GM10248 (cell line): ENCODE measurements at regions of chr1 and their contacts with region 1.

Region 1: DNA sequence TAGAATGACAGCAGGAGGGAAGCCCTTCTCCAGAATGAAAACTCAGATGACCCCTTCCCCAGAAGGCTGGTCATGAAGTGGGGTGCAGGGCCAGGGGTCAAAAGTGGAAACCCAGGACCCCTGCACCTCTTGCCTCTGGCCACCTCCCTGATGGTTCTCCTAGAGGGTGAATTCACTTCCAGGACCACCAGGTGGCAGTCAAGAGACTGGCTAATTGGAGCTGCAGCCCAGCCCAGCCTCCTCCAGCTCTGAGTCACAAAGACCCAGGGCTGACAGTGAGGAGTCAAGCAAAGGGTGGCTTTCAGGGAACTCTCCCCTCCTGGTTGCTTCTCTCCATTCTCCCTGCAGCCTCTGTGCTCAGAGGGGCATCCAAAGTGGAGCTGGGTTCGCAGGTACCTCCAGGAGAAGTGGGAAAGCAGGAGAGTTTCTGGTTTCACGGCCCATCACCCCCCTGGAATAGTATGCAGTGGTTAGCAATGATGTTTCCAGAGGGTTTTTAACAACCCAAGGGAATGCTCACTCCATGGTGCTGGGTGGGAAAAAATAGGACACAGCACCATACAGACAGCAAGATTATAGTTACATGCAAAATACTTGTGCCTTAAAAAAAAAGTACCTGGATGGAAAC is 6.1 kb upstream of the EPHB2 start:
- DNase-seq: peak; percentile 81
- CTCF ChIP-seq: peak; percentile 75

Region 2: DNA sequence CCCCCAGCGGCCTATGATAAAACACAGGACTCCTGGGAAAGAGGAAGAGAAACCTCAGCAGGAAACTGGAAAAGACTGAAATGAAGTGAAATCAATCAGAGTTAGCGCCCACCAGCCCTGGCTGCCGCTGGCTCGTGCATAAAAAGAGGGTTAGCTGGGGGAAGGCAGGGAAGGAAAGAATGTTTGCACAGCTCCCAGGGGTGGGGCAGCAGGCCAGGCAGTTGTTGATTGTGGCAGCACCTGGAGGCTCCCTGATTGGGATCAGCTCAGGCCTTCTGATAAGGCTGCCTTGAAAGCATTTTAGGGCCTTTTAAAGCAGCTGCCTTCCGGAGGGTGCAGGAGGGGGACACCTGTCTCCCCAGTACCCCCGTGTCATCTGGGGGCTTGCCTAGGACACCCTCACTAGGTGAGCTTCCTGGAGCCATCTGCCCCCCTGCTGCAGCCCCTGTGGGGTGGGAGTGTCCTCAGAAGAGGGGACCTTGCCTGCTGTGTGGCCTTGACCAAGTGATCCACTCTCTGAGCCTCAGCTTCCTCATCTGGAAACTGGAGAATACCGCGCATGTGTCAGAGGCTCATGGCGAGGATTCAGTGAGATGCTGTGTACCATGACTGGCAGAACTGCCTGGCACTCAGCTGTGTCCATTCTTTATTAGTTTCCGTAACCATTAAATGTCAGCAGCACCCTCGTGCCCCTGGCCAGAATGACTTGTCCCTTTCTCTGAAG is 12.6 kb after region 1 on chr1:
- CTCF ChIA-PET with region 1: interaction called, 28 read pairs
- POLR2A ChIA-PET with region 1: no interaction called
- DNase-seq: no peak
- CTCF ChIP-seq: no peak

Region 3: DNA sequence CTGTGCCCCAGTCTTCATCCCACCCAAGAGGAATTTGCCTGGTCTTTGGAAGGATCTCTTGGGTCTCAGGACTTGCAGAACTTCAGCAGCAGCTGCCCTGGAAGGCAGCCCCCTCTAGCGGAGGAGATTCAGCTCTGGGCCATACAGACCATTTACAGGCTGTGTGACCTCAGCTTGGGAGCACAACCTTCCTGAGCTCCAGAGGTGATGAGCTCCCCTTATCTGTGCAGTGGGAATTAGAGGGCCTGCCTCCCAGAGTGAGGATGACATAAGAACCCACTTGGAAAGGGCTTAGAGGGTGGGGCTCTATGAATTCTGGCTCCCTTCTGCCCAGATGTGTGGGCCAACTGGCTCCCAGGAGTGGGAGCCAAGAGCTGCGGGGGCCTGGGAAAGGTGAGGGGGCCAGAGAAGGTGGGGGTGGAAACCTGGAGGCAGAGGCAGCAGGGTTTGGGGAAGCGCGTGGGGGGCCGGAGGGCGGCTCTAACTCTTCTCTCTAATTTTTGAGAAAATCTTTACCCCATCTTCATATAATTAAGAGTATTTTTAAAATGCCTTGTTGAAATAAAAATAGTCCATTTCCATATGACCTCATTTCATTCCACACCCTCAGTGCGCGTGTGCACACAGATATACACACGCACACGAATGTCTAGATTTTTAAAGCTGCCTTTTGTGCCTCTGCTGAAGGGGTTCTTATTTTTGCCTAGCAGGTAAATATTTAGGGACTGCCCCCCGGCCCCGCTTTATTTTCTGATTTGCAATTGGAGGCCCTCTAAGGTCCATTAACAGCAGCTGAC is 27.6 kb after region 1 on chr1:
- CTCF ChIA-PET with region 1: interaction called, 21 read pairs
- POLR2A ChIA-PET with region 1: no interaction called
- DNase-seq: no peak
- CTCF ChIP-seq: peak; percentile 41

Region 4: DNA sequence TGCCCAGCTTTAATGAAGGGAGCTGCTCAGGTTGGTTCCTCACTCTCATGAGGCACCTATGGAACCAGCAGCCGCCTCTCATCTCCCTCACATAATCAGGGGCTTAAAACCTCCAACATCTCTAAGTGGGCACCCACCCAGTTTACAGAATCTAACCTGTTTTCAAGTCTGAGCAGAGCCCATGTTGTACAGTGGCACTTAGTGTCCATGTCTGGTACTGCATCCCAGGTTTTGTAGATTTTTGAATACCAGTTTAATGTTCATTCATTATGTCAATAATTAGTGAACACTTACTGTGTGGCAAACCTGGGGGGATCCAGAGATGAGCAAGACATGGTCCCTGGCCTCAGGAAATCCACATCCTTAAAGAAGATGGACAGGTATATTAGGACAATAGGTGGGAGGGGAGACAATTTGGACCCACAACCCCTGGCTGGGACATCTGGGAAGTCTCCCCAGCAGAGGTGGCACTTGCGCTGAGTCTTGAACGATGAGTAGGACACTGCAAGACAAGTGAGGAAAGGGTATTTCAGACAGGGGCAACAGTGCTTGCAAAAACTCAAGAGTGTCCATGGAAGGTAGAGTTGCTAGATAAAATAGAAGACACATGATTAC is 184.8 kb after region 1 on chr1:
- CTCF ChIA-PET with region 1: interaction called, 38 read pairs
- POLR2A ChIA-PET with region 1: no interaction called
- DNase-seq: peak; percentile 58
- CTCF ChIP-seq: peak; percentile 63

Region 5: GRCh38 chr1:22963044-22963677 is 258.6 kb after region 1 on chr1:
- CTCF ChIA-PET with region 1: interaction called, 16 read pairs
- POLR2A ChIA-PET with region 1: no interaction called
- DNase-seq: no peak
- CTCF ChIP-seq: no peak